Activated CD4-positive, alpha-beta T cell treated with anti-CD3 and anti-CD28 coated beads for 36 hours (primary cell): ENCODE measurements at regions of chr10 and their contacts with region 1.

Region 1: DNA sequence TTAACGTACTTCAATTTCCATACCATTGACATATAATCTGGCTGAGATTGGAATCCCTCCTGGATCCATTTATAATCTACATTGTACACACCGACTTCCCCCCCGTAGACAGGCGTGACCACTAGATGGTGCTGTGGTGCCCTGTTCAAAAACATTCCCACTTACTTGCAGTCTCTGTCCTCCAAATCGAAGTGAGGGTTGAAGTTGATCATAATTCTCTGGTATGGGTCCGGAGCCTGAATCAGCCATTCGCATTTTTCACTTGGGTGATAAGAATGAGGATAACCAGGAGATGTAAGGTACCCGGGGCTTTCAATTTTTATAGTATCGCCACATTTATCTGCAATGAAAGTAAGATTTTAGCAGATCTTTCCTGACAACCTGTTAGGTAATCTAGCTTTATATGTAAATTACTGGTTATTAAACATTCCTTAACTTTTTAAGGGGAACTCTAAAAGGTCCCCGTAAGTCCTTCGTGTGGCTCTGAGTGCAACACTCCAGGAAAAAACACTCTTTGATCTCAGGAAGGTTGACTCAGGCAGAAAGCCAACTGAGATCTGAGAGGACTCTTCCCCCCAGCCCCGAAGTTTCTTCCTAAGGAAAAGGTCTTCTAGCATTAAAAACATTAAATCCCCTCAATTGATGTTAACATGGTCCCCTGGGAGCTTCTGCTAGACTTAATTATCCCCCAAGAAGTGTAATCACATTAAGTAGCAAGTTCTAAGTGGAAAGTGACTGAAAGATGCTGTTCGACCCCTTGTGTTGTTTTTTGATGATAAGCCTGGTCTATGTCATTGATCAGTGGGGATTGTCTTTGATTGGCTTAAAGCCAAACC is 3.7 kb downstream of the NRP1 start:
- DNase-seq: peak; percentile 89
- ATAC-seq: peak; percentile 37
- H3K4me3 Mint-ChIP-seq: no peak overlapping the region
- H3K27ac Mint-ChIP-seq: no peak overlapping the region
- H3K4me1 Mint-ChIP-seq: peaks cover 16% of the 10 kb centered on the region
- H3K27me3 Mint-ChIP-seq: peaks cover 62% of the 10 kb centered on the region

Region 2: GRCh38 chr10:33347211-33347610 is 16.4 kb after region 1 on chr10:
- CTCF ChIA-PET with region 1: interaction called, 12 read pairs
- POLR2A ChIA-PET with region 1: no interaction called
- intact Hi-C with region 1: no loop called
- DNase-seq: no peak
- ATAC-seq: no peak
- H3K4me3 Mint-ChIP-seq: no peak overlapping the region
- H3K27ac Mint-ChIP-seq: no peak overlapping the region
- H3K4me1 Mint-ChIP-seq: no peaks in the 10 kb centered on the region
- H3K27me3 Mint-ChIP-seq: peaks cover 39% of the 10 kb centered on the region

Region 3: DNA sequence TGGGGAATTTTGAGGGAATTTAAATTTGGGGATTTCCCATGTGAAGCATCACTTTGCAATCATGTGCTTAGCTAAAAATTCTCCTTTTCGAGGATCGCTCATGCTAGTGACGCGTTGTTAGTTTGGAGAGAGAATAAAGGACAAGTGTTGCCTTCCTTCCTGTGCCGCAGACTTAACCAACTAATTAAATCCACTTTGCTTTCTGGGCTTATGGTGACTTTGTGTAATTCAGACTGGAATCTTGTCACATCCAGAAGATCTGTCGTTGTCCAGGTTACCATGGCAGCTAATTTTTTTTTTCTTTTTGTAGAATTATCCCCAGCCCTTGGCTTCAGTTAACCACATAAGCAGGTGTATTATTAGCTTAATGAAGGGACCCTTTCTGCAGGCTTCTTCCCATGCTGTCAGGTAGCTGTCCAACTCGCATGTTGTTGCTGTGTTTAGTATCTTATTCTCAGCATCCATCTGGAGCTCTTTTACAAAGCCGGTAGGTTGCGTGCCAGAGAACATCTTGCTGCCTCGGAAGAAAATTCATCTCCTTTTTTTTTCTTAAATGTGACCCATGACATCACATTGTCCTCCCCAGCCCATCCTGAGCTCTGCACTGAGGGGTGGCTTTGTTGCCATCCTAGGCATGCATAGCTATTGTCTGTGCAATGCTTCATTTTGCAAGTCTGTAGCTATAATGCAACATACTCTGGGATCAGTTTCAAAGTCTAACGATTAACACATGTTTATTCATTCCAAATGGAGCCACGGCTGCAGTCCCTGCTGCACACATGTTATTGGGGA is 50.9 kb after region 1 on chr10:
- CTCF ChIA-PET with region 1: no interaction called
- POLR2A ChIA-PET with region 1: no interaction called
- intact Hi-C with region 1: no loop called
- DNase-seq: no peak
- ATAC-seq: no peak
- H3K4me3 Mint-ChIP-seq: no peak overlapping the region
- H3K27ac Mint-ChIP-seq: no peak overlapping the region
- H3K4me1 Mint-ChIP-seq: peaks cover 17% of the 10 kb centered on the region
- H3K27me3 Mint-ChIP-seq: peaks cover 28% of the 10 kb centered on the region

Region 4: DNA sequence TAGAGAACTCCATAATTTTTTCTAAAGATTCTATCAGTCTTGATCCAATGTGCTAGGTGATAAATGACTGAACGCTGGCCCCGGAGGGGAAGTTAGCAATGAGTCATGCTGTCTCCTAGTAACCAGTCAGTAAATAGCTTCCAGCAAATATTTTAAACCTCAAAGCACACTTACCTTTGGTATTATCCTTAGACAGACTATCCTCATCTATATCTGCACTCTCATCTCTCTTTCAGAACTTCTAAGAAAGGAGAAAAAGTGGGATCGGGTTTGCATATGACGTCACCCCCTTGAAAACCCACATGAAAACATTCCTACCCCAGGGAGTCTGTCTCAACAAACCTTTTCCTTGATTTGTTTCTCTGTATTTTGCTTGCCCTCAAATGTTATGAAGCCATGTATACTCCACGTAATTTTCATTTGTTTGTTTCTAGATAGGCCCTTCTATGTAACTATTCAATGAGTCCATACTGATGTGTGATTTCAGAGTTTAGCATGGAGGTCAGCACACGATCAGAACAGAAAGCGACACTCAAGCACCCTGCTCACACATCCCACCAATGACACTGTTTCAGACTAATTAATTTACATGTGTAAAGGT is 178.6 kb after region 1 on chr10:
- CTCF ChIA-PET with region 1: no interaction called
- POLR2A ChIA-PET with region 1: no interaction called
- intact Hi-C with region 1: loop called (anchors 5 to 10 kb)
- DNase-seq: peak; percentile 64
- ATAC-seq: peak; percentile 85
- H3K4me3 Mint-ChIP-seq: no peak overlapping the region
- H3K27ac Mint-ChIP-seq: peak overlapping the region; percentile 32
- H3K4me1 Mint-ChIP-seq: peaks cover 8% of the 10 kb centered on the region
- H3K27me3 Mint-ChIP-seq: peaks cover 20% of the 10 kb centered on the region

Region 5: GRCh38 chr10:34121781-34122628 is 791.2 kb after region 1 on chr10:
- CTCF ChIA-PET with region 1: no interaction called
- POLR2A ChIA-PET with region 1: no interaction called
- intact Hi-C with region 1: loop called in 1 of 2 experiments (anchors 10 kb)
- DNase-seq: peak; percentile 31
- ATAC-seq: peak; percentile 93
- H3K4me3 Mint-ChIP-seq: no peak overlapping the region
- H3K27ac Mint-ChIP-seq: no peak overlapping the region
- H3K4me1 Mint-ChIP-seq: peaks cover 23% of the 10 kb centered on the region
- H3K27me3 Mint-ChIP-seq: no peaks in the 10 kb centered on the region